Stomach (tissue), 19 donors: ENCODE measurements at regions of chr11 and their contacts with region 1.

Region 1: GRCh38 chr11:68257475-68258362 is 14.1 kb downstream of the C11orf24 start:
- DNase-seq: peak; percentile 96 to 99
- H3K4me3 ChIP-seq: no peak overlapping the region
- H3K27ac ChIP-seq: peak overlapping the region in 1 of 5 donors; percentile 57
- H3K4me1 ChIP-seq: peaks cover 8 to 10% (median 9%) of the 10 kb centered on the region in 4 donors
- H3K27me3 ChIP-seq: no peaks in the 10 kb centered on the region
- CTCF ChIP-seq: peak in 6 of 7 experiments; percentile 20 to 95 (median 84)
- EP300 ChIP-seq: no peak
- POLR2A ChIP-seq: no peak

Region 2: GRCh38 chr11:68099474-68100405 is 158.0 kb before region 1 on chr11:
- intact Hi-C with region 1: no loop called
- DNase-seq: peak; percentile 90 to 95
- H3K4me3 ChIP-seq: no peak overlapping the region
- H3K27ac ChIP-seq: peak overlapping the region; percentile 63 to 81 (median 73)
- H3K4me1 ChIP-seq: peaks cover 22 to 86% (median 60%) of the 10 kb centered on the region in 4 donors
- H3K27me3 ChIP-seq: no peaks in the 10 kb centered on the region
- CTCF ChIP-seq: no peak
- EP300 ChIP-seq: no peak
- POLR2A ChIP-seq: no peak

Region 3: DNA sequence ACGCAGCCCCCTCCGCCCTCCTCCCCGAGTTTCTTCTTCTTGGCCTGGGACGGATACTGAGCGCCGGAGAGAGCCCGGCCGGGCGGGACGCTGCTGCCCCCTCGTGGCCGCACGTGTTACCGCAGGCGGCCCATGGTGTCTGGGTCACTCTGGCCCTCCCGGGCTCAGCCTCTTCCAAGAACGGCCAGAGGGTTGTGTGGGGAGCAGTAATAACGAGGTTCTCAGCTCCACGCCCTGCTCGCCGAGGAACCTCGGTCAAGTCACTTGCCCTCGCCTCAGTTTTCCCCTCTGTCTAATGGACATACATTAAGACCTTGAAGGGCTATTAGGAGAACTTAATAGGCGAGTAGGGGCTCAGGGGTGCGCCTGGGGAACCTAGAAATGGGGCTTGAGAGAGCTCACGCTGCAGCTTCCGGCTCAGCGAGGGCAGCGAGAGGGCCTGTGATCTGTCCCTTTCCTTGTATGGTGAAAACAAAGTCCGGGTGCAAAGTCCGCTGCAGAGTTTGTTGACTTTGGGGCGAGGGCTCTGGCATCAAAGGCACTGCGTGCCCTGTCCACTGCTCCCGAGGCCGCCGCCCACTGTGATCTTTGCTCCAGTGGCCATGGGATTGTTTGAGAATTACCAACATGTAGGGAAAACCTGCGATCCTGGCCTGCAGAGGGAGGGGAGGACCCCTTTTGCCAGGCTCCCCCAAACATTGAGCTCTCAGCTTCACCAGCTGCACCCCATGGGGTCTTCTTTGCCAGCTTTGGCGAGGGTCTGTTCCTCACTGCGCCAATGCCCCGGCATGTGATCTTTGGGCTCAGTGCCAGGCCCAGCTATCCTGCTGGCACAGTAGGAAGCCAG is 40.3 kb after region 1 on chr11:
- intact Hi-C with region 1: loop called (anchors 5 kb)
- DNase-seq: peak; percentile 87 to 93
- H3K4me3 ChIP-seq: peak overlapping the region in 2 of 4 donors; percentile 0 to 11
- H3K27ac ChIP-seq: peak overlapping the region; percentile 68 to 79 (median 69)
- H3K4me1 ChIP-seq: peaks cover 22 to 41% (median 36%) of the 10 kb centered on the region in 4 donors
- H3K27me3 ChIP-seq: no peaks in the 10 kb centered on the region
- CTCF ChIP-seq: peak in 6 of 7 experiments; percentile 23 to 99 (median 98)
- EP300 ChIP-seq: no peak
- POLR2A ChIP-seq: no peak

Region 4: GRCh38 chr11:68354148-68354872 is 96.6 kb after region 1 on chr11:
- intact Hi-C with region 1: no loop called
- DNase-seq: peak; percentile 87 to 94
- H3K4me3 ChIP-seq: peak overlapping the region in 1 of 4 donors; percentile 14
- H3K27ac ChIP-seq: peak overlapping the region; percentile 75 to 89 (median 86)
- H3K4me1 ChIP-seq: peaks cover 29 to 77% (median 40%) of the 10 kb centered on the region in 4 donors
- H3K27me3 ChIP-seq: no peaks in the 10 kb centered on the region
- CTCF ChIP-seq: no peak
- EP300 ChIP-seq: peak; percentile 7
- POLR2A ChIP-seq: no peak

Region 5: DNA sequence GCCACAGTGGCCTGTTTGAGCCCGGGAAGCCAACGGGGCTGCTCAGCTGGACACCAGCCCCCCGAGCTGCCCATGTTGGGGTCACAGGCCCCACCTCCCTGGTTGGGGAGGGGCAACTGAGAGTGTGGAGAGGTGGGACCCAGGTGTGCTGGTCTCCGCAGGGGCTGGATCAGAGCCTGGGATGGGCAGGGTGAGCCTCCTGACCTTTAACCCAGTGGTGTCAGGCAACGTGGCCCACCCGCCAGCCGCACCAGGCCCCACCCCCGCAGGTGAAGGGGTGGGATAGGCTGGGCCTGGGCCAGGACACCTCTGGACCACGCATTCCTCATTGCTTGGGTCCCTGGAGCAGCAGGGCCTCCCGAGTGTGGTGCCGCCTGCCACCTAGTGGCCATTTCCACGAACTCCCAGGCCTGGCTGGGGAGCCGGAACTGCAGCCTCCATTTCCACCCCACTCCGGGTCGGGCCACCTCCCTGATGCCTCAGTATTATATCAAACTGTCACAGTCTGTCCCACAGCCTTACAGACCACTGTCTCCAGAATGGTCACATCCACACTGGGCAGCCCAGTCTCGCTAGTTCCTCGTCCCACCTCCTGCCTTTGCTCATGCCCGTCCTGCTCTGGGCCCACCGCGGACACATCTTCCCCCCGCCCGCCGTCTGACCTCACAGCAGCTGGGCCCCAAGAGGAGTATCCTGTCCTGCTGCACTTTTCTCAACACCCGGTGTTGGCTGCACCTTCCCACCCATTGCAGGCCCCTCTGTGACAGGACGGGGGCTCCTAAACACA is 189.5 kb after region 1 on chr11:
- intact Hi-C with region 1: loop called (anchors 5 kb)
- DNase-seq: peak; percentile 82 to 92
- H3K4me3 ChIP-seq: no peak overlapping the region
- H3K27ac ChIP-seq: peak overlapping the region in 2 of 5 donors; percentile 21 to 35
- H3K4me1 ChIP-seq: peaks cover 0 to 10% (median 8%) of the 10 kb centered on the region in 4 donors
- H3K27me3 ChIP-seq: no peaks in the 10 kb centered on the region
- CTCF ChIP-seq: peak in 5 of 7 experiments; percentile 83 to 95 (median 93)
- EP300 ChIP-seq: no peak
- POLR2A ChIP-seq: no peak